Calu3 (cell line): ENCODE measurements at regions of chr17 and their contacts with region 1.

Region 1: GRCh38 chr17:39800540-39800939 is 62.8 kb downstream of the GRB7 start:
- DNase-seq: peak; percentile 85
- H3K4me3 Mint-ChIP-seq: no peak overlapping the region
- H3K27ac Mint-ChIP-seq: no peak overlapping the region
- H3K4me1 Mint-ChIP-seq: peaks cover 17% of the 10 kb centered on the region
- H3K27me3 Mint-ChIP-seq: no peaks in the 10 kb centered on the region
- CTCF ChIP-seq: no peak

Region 2: GRCh38 chr17:39653662-39654331 is 146.7 kb before region 1 on chr17:
- CTCF ChIA-PET with region 1: interaction called, 123 read pairs
- intact Hi-C with region 1: no loop called
- DNase-seq: peak; percentile 100
- H3K4me3 Mint-ChIP-seq: no peak overlapping the region
- H3K27ac Mint-ChIP-seq: no peak overlapping the region
- H3K4me1 Mint-ChIP-seq: peaks cover 23% of the 10 kb centered on the region
- H3K27me3 Mint-ChIP-seq: no peaks in the 10 kb centered on the region
- CTCF ChIP-seq: no peak

Region 3: DNA sequence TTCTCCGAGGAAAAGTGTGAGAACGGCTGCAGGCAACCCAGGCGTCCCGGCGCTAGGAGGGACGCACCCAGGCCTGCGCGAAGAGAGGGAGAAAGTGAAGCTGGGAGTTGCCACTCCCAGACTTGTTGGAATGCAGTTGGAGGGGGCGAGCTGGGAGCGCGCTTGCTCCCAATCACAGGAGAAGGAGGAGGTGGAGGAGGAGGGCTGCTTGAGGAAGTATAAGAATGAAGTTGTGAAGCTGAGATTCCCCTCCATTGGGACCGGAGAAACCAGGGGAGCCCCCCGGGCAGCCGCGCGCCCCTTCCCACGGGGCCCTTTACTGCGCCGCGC is 100.8 kb before region 1 on chr17 and contains the start of gene ERBB2:
- CTCF ChIA-PET with region 1: interaction called, 99 read pairs
- intact Hi-C with region 1: no loop called
- DNase-seq: peak; percentile 100
- H3K4me3 Mint-ChIP-seq: peak within 1 kb of the TSS; percentile 71
- H3K27ac Mint-ChIP-seq: peak within 1 kb of the TSS; percentile 67
- H3K4me1 Mint-ChIP-seq: peaks cover 68% of the 10 kb centered on the region
- H3K27me3 Mint-ChIP-seq: no peaks in the 10 kb centered on the region
- CTCF ChIP-seq: no peak
- total RNA-seq, gene ERBB2: 4,829 and 4,830 TPM in 2 replicates

Region 4: GRCh38 chr17:39763046-39763820 is 37.3 kb before region 1 on chr17:
- CTCF ChIA-PET with region 1: interaction called, 76 read pairs
- intact Hi-C with region 1: no loop called
- DNase-seq: no peak
- H3K4me3 Mint-ChIP-seq: no peak overlapping the region
- H3K27ac Mint-ChIP-seq: no peak overlapping the region
- H3K4me1 Mint-ChIP-seq: peaks cover 12% of the 10 kb centered on the region
- H3K27me3 Mint-ChIP-seq: peaks cover 26% of the 10 kb centered on the region
- CTCF ChIP-seq: no peak

Region 5: DNA sequence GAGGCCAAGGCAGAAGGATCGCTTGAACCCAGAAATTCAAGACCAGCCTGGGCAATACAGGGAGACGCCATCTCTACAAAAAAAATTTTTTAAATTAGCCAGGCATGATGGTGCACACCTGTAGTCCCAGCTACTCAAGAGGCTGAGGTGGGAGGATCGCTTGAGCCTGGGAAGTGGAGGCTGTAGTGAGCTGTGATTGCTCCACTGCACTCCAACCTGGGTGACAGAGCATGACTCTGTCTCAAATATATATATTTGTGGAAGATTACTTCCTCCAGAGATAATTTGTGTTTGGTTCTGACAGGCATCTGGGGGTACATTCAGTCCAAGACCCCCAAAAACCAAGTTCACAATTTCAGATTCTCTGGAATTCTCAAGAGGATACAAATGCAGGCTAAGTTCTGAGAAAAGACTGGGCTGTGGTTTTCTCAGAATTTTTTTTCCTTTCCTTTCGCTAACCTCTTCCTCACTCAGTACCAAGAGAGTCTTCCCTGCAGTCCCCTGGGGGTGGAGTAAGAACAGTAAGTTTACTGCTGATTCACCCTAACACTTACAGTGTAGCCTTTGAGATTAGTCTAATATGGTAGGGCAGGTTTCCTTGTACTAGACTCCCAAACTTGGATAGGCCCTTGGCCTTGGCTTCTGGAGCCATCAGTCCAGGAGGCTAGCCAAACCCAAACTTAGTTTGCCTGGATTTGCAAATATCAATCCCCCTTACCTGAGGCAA is 102.8 kb after region 1 on chr17:
- CTCF ChIA-PET with region 1: interaction called, 596 read pairs
- intact Hi-C with region 1: no loop called
- DNase-seq: peak; percentile 66
- H3K4me3 Mint-ChIP-seq: no peak overlapping the region
- H3K27ac Mint-ChIP-seq: no peak overlapping the region
- H3K4me1 Mint-ChIP-seq: peaks cover 12% of the 10 kb centered on the region
- H3K27me3 Mint-ChIP-seq: no peaks in the 10 kb centered on the region
- CTCF ChIP-seq: no peak

Region 6: DNA sequence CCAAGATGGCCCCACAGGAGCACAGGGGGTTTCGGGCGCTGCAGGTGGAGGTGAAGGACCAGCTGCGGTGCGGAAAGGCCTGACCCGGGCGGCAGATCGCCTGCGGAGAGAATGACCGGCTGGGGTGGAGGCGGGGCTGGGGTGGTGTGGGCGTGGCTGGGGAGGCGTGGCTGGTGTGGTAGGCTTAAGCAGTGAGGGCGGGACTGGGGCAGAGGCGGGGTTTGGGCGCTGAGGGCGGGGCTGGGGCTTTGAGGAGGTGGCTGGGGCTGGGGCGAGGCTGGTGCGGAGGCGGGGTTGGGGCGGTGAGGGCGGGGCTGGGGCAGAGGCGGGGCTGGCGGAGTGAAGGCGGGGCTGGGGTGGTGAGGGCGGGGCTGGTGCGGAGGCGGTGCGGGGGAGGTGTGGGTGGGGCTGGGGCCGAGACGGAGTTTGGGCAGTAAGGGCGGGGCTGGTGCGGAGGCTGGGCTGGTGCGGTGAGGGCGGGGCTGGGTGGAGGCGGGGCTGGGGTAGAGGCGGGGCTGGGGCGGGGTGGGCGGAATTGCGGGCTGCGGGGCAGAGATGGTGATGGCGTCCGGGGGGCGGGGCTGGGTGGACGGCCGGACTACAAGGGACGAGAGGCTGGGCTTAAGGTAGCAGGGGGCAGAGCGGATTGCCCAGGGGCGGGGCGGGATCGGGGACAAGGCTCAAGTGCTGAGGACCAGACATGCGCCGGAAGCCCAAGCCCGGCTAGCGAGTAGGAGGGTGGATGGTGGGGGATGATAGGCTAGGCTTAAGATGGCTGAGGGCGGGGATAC is 152.3 kb after region 1 on chr17:
- CTCF ChIA-PET with region 1: interaction called, 501 read pairs
- intact Hi-C with region 1: no loop called
- DNase-seq: peak; percentile 100
- H3K4me3 Mint-ChIP-seq: peak overlapping the region; percentile 58
- H3K27ac Mint-ChIP-seq: peak overlapping the region; percentile 18
- H3K4me1 Mint-ChIP-seq: peaks cover 42% of the 10 kb centered on the region
- H3K27me3 Mint-ChIP-seq: peaks cover 15% of the 10 kb centered on the region
- CTCF ChIP-seq: no peak